Activated CD4-positive, alpha-beta T cell treated with anti-CD3 and anti-CD28 coated beads for 36 hours (primary cell): ENCODE measurements at regions of chrX and their contacts with region 1.

Region 1: GRCh38 chrX:101348452-101349192 is at the start of gene TIMM8A:
- DNase-seq: peak; percentile 88
- ATAC-seq: peak; percentile 98
- H3K4me3 Mint-ChIP-seq: peak within 1 kb of the TSS; percentile 85
- H3K27ac Mint-ChIP-seq: peak within 1 kb of the TSS; percentile 93
- H3K4me1 Mint-ChIP-seq: peaks cover 9% of the 10 kb centered on the region
- H3K27me3 Mint-ChIP-seq: no peaks in the 10 kb centered on the region
- total RNA-seq, gene TIMM8A: 12.8 to 23.8 TPM

Region 2: GRCh38 chrX:101390664-101391525 is 42.3 kb after region 1 on chrX and contains the start of gene RPL36A:
- CTCF ChIA-PET with region 1: interaction called, 7 read pairs
- POLR2A ChIA-PET with region 1: interaction called, 21 read pairs
- intact Hi-C with region 1: loop called (anchors 1 to 2 kb)
- DNase-seq: peak; percentile 90
- ATAC-seq: peak; percentile 97
- H3K4me3 Mint-ChIP-seq: peak within 1 kb of the TSS; percentile 95
- H3K27ac Mint-ChIP-seq: peak within 1 kb of the TSS; percentile 96
- H3K4me1 Mint-ChIP-seq: peaks cover 6% of the 10 kb centered on the region
- H3K27me3 Mint-ChIP-seq: peaks cover 3% of the 10 kb centered on the region
- total RNA-seq, gene RPL36A: 340 to 709 TPM

Region 3: GRCh38 chrX:101429934-101430333 is 81.3 kb after region 1 on chrX:
- CTCF ChIA-PET with region 1: no interaction called
- POLR2A ChIA-PET with region 1: no interaction called
- intact Hi-C with region 1: no loop called
- DNase-seq: no peak
- ATAC-seq: peak; percentile 80
- H3K4me3 Mint-ChIP-seq: no peak overlapping the region
- H3K27ac Mint-ChIP-seq: peak overlapping the region; percentile 65
- H3K4me1 Mint-ChIP-seq: peaks cover 11% of the 10 kb centered on the region
- H3K27me3 Mint-ChIP-seq: no peaks in the 10 kb centered on the region

Region 4: DNA sequence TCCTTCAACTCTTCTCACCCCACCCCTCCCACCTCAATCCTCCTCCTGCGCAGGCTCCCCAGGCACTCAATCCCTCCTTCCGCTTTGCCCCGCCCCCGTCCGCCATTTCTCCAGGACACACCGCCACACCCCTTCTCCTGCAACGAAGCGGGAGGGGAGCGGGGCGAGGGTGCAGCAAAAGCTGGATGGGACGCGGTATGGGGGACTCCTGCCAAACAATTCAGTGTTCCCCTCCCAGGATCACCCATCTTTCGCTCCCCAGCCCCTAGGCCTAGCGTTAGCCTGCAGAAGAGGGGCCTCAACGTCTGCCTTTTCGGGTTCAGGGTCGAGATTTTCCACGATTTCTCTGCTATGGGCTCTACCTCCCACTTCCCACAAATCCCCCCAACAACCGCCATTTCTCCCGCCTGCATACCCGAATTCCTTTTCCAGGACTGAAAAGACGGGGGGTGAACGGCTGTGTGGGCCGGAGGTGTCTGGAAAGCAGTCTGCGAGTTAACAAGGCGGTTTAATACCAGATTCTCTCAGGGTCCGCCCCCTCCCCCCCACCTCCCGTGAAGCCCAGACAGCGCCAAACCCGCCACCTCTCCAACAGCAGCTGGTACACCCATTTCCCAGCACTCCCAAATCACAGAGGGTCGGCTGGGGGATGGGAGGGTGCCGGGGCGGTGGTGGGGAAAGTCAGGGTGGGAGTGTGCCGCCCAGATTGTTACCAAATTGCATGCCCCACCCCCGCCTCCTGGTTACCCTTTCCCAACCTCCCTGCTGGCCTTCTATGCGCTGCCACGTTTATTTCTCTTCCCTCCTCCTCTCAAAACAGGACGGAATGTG is 310.3 kb after region 1 on chrX:
- CTCF ChIA-PET with region 1: no interaction called
- POLR2A ChIA-PET with region 1: no interaction called
- intact Hi-C with region 1: no loop called
- DNase-seq: peak; percentile 81
- ATAC-seq: peak; percentile 90
- H3K4me3 Mint-ChIP-seq: peak overlapping the region; percentile 77
- H3K27ac Mint-ChIP-seq: peak overlapping the region; percentile 47
- H3K4me1 Mint-ChIP-seq: peaks cover 22% of the 10 kb centered on the region
- H3K27me3 Mint-ChIP-seq: no peaks in the 10 kb centered on the region